Activated naive CD4-positive, alpha-beta T cell treated with anti-CD3 and anti-CD28 coated beads for 36 hours (primary cell): ENCODE measurements at regions of chr1 and their contacts with region 1.

Region 1: DNA sequence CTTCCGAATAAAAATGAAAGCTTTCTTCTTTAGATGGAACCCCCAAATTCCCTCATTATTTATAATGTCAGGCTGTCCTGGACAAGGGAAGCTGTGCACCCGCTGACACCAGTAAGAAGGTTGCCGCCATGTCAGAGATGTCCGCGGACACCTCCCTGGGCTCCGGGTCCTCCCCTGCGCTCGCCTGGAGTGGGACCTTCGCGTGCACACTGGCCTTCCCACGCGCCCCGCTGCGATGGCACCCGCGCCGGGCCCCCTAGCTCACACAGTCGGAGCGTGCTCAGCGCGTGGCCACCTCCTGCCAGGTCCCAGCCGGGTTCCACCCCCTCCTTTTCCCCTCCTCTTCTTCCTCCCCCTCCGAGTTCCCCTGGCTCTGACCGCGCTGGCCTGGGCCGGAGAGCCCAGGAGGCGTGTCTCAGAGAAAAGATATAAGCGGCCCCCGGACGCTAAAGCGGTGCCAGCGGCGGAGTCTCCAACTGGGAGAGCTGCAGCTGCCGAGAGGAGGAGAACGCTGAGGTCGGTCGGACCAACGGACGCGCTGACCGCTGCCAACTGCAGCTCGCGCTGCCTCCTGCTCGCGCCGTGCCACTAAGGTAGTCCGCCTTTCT is at the start of gene G0S2:
- DNase-seq: peak; percentile 68
- H3K4me3 Mint-ChIP-seq: peak within 1 kb of the TSS; percentile 87
- H3K27ac Mint-ChIP-seq: peak within 1 kb of the TSS; percentile 92
- H3K4me1 Mint-ChIP-seq: peaks cover 59% of the 10 kb centered on the region
- H3K27me3 Mint-ChIP-seq: peaks cover 19% of the 10 kb centered on the region
- total RNA-seq, gene G0S2: 138 to 139 TPM

Region 2: GRCh38 chr1:209607102-209607794 is 67.8 kb before region 1 on chr1:
- CTCF ChIA-PET with region 1: interaction called, 5 read pairs
- intact Hi-C with region 1: loop called (anchors 1 kb)
- DNase-seq: peak; percentile 88
- H3K4me3 Mint-ChIP-seq: peak overlapping the region; percentile 51
- H3K27ac Mint-ChIP-seq: peak overlapping the region; percentile 86
- H3K4me1 Mint-ChIP-seq: peaks cover 11% of the 10 kb centered on the region
- H3K27me3 Mint-ChIP-seq: no peaks in the 10 kb centered on the region

Region 3: DNA sequence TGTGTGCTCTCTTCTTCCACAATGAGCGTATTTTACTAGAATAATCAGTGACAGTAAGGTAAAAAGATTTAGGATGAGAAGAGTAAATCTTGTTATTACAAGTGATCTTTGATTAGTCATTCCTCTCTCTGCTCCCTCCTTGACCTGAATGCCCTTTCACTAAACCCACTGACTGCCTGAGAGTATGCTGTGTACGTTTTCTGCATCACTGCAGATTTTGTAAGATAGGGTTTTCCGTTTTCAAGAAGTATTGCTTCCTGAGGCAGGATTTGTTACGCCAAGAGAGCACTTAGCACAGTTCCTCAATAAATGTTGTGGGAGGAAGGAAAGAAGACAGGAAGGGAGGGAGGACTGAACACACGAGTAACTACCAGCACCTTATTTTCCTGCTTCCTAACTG is 15.2 kb before region 1 on chr1:
- CTCF ChIA-PET with region 1: interaction called, 3 read pairs
- intact Hi-C with region 1: loop called (anchors 1 kb)
- DNase-seq: no peak
- H3K4me3 Mint-ChIP-seq: no peak overlapping the region
- H3K27ac Mint-ChIP-seq: peak overlapping the region; percentile 33
- H3K4me1 Mint-ChIP-seq: peaks cover 9% of the 10 kb centered on the region
- H3K27me3 Mint-ChIP-seq: no peaks in the 10 kb centered on the region

Region 4: GRCh38 chr1:209723756-209724693 is 49.0 kb after region 1 on chr1:
- CTCF ChIA-PET with region 1: interaction called, 4 read pairs
- intact Hi-C with region 1: loop called (anchors 1 kb)
- DNase-seq: peak; percentile 80
- H3K4me3 Mint-ChIP-seq: peak overlapping the region; percentile 49
- H3K27ac Mint-ChIP-seq: peak overlapping the region; percentile 99
- H3K4me1 Mint-ChIP-seq: peaks cover 70% of the 10 kb centered on the region
- H3K27me3 Mint-ChIP-seq: no peaks in the 10 kb centered on the region

Region 5: DNA sequence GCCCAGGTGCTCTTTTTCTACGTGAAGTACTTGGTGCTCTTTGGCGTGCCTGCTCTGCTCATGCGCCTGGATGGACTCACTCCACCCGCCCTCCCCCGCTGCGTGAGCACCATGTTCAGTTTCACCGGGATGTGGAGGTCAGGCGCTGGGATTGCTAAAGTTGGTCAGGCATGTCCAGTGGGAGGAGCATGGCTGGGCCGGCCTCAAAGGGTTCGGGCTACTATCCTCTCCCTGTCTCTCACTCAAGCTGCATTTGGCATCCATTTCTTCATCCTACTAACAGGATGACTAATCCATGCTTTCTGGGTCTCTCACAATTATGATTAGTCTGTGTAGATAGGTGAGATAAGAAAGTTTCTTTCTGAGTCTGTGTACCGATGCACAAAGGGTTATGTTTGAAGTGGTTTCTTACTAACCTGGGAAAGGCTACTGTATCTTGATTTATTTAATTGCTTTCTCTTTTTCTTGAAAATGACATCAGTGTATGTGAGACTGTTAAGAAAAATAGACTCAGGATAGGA is 789.5 kb after region 1 on chr1:
- CTCF ChIA-PET with region 1: no interaction called
- intact Hi-C with region 1: loop called (anchors 1 kb)
- DNase-seq: peak; percentile 22
- H3K4me3 Mint-ChIP-seq: no peak overlapping the region
- H3K27ac Mint-ChIP-seq: peak overlapping the region; percentile 57
- H3K4me1 Mint-ChIP-seq: peaks cover 23% of the 10 kb centered on the region
- H3K27me3 Mint-ChIP-seq: peaks cover 2% of the 10 kb centered on the region